AG04449 (cell line): ENCODE measurements at regions of chr1 and their contacts with region 1.

Region 1: DNA sequence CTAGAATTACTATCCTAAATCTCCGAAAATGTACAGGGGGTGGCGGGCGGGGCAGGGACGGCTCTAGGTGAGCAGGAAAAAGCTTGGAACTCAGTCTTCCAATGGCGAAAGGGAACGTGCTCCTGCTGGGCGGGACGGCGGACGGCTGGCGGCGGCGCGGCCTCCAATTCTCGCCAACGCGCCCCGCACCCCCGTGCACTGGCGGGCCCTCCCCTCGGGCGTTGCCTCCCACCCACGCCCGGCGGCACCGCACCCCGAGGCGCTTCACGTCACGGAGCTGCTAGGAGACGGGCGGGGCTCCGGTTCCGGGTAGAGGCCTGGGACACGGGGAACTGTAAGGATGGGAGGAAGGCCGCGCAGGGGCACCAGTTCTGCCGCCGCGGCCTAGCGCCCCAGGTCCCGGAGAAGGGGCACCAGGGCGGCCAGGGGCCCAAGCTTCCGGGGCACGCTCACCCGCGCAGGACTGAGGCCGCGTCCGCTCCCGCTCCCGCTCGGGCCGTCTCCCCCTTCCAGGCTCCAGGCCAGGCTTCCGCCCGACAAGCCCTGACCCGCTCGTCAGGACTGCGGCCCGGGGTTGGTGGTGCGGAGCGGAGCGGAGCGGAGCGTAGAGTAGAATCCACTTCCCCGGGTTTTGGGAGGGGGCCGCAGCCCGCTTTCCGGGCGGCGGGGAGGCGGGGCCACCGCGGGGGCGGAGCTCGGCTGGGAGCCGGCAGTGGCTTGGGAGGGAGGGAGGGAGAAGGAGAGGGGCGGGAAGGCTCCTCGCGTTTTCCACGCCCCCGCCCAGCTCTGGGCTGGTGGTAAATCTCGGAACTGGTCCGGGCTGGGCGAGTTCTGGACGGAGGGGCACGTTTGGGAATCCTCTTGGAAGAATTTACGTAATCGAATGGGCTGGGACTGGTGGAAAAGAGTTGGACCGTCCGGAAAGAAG is at the start of gene DDX59:
- DNase-seq: peak; percentile 81
- H3K4me3 ChIP-seq: peak within 1 kb of the TSS; percentile 95
- CTCF ChIP-seq: no peak

Region 2: DNA sequence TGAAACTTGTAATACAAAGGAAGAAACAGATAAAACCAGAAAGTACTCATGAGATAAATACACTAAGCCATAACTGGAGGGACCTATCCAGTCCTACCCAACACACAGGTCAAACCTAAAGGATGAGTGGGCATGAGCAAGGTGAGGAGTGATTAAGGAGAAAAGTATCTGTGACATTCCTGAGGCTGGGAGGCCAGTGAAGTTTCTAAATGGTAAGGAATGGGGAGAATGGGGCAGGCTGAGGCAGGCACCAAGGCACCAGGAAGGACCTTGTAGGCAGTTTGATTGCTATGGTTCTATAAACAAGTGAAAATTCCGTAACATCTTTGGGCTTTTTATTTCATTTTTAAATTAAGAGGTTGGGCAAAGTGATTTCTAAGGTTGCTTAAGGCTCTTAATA is 10.3 kb before region 1 on chr1:
- CTCF ChIA-PET with region 1: interaction called, 10 read pairs
- POLR2A ChIA-PET with region 1: no interaction called
- DNase-seq: no peak
- H3K4me3 ChIP-seq: no peak overlapping the region
- CTCF ChIP-seq: no peak

Region 3: DNA sequence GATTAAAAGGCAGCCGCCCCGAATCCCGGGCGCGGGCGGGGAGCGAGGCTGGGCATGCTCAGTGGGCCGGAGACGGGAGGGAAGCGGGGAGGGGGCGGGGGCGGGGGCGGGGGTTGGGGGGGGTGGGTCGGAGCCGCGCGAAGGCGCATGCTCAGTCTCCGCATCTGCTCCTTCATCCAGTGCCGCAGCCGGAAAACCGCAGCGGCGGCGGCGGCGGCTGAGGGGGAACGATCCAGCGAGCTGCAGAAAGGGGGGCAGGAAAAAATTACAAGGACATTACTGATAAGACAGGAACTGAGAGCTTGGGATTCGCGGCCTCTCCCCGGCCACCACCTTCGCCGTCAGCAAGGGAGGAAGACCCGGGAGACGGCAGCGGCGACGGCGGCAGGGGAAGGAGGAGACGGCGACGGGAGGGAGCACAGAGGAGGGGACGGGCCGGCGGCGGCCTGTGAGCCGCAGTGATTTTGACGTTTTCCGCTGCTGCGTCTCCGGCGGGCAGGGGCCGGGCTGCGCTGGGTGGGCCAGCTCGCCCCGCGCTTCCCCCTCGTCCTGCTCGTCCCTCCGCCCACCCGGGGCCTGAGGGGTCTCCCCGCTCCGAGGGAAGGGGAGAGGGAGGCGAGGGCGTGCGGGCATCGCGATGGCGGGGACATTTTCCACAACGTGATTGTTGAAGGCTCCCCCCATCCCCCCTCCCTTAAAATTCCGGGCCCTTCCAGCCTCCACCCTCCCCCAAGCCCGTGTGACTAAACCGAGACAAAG is 69.3 kb after region 1 on chr1 and contains the start of gene CAMSAP2:
- CTCF ChIA-PET with region 1: no interaction called
- POLR2A ChIA-PET with region 1: interaction called, 12 read pairs
- DNase-seq: no peak
- H3K4me3 ChIP-seq: peak within 1 kb of the TSS; percentile 93
- CTCF ChIP-seq: no peak

Region 4: DNA sequence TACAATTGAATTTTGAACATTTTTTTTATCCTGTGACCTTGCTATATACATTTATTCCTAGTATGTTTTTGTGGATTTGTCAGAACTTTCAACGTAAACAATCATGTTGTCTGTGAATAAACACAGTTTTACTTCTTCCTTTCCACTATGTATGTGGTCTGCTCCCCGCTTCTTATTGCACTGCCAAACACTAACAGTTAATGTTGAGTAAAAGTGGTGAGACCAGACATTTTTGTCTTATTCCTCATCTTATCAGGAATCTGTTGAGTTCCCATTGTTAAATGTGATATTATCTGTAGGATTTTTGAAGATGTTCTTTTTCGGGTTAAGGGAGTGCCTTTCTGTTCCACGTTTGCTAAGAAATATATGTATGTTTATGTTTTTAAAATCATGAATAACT is 115.0 kb after region 1 on chr1:
- CTCF ChIA-PET with region 1: no interaction called
- POLR2A ChIA-PET with region 1: no interaction called
- DNase-seq: no peak
- H3K4me3 ChIP-seq: no peak overlapping the region
- CTCF ChIP-seq: no peak